Heart left ventricle (tissue), 16 donors: ENCODE measurements at regions of chr15 and their contacts with region 1.

Region 1: GRCh38 chr15:45402162-45402954 is 24.0 kb upstream of the GATM start:
- DNase-seq: peak; percentile 98 to 99 (median 98)
- ATAC-seq: peak; percentile 98 to 99 (median 98)
- H3K4me3 ChIP-seq: peak overlapping the region; percentile 68 to 98 (median 86)
- H3K27ac ChIP-seq: peak overlapping the region; percentile 77 to 97 (median 90)
- H3K4me1 ChIP-seq: peaks cover 0 to 35% (median 19%) of the 10 kb centered on the region in 12 donors
- H3K27me3 ChIP-seq: no peaks in the 10 kb centered on the region
- CTCF ChIP-seq: peak in 1 of 12 donors; percentile 5
- POLR2A ChIP-seq: peak in 1 of 2 donors; percentile 74

Region 2: DNA sequence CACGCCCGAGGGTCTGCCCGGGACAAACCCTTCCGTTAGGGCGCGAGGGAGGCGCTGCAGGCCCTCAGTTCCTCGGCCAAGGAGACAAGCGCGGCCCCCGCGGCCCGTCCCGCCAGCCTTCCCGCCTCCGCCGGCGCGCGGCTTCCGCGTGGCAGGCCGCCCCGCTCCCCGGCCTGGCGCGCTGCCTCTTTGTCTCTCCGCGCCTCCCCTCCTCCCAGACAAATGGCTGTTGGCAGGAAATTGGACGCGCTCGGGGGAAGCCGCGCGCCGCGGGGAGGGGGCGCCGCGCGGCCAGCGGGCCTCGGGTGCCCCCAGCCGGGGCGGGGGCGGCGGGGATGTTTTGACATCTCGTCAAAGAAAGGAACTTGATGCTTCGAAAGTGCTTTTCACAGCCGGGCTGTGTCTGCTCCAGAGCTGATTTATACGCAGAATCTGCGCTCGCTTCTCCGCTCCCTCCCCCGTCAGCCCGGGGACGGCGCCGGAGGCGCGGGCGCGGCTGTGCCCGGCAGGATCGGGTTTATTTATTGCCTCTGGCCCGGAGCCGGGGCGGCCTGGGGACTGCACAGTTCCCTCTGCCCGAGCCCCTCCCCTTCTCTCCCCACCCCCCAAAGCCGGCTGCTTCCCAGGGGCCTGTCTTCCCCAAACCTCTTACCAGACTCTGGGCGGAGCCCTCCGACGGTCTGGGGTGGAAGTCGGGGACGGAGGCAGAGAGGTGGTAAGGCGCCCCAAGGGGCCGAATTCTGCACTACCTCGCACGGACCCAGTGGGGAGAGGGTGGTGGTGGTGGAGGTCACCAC is 235.3 kb before region 1 on chr15:
- intact Hi-C with region 1: loop called in 9 of 10 experiments (anchors 1 to 10 kb)
- DNase-seq: peak; percentile 85 to 93 (median 91)
- ATAC-seq: peak; percentile 67 to 87 (median 85)
- H3K4me3 ChIP-seq: peak overlapping the region; percentile 59 to 93 (median 76)
- H3K27ac ChIP-seq: peak overlapping the region; percentile 94 to 100 (median 99)
- H3K4me1 ChIP-seq: peaks cover 0 to 31% (median 14%) of the 10 kb centered on the region in 12 donors
- H3K27me3 ChIP-seq: no peaks in the 10 kb centered on the region
- CTCF ChIP-seq: peak; percentile 32 to 70 (median 58)
- POLR2A ChIP-seq: peak in 1 of 2 donors; percentile 39

Region 3: DNA sequence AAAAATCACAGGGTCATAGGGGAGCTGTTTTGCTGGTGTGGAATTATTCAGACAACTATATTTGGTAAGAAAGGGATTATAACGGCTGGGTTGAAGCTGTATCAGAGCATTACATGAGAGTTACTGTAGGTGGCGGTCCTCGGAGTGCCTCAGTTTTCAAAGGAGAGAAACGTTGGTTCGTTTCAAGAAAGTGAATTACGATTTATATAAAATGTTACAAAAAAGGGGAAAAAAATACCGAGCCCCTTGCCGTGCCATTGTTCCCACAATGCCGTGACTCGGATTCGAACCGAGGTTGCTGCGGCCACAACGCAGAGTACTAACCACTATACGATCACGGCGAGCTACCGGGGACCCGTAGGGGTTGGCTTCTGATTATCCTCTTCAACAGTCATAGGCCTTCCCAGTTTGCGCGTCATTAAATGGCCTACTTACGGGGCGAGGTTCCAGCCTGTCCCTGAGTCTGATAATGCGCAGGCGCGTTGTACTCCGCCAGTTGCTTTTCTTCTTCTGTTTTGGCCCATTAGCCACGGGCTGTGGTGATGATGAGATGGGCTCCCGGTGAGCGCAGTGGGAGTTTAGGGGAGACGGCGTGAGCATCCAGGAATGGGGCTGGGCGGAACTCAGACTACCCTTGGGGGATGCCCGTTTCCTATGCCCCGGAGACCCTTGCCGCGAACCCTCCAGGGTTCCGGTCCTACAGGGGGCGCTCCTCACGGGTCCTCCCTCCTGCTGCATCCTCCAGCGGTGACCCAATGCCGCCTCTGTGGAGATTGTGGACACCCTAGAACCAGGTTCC is 203.8 kb before region 1 on chr15:
- intact Hi-C with region 1: loop called in 7 of 10 experiments (anchors 1 to 10 kb)
- DNase-seq: peak; percentile 92 to 97 (median 95)
- ATAC-seq: peak; percentile 77 to 84 (median 80)
- H3K4me3 ChIP-seq: peak overlapping the region; percentile 25 to 85 (median 70)
- H3K27ac ChIP-seq: peak overlapping the region; percentile 94 to 99 (median 98)
- H3K4me1 ChIP-seq: peaks cover 0 to 43% (median 6%) of the 10 kb centered on the region in 12 donors
- H3K27me3 ChIP-seq: no peaks in the 10 kb centered on the region
- CTCF ChIP-seq: peak in 11 of 12 donors; percentile 52 to 92 (median 71)
- POLR2A ChIP-seq: peak in 1 of 2 donors; percentile 96

Region 4: DNA sequence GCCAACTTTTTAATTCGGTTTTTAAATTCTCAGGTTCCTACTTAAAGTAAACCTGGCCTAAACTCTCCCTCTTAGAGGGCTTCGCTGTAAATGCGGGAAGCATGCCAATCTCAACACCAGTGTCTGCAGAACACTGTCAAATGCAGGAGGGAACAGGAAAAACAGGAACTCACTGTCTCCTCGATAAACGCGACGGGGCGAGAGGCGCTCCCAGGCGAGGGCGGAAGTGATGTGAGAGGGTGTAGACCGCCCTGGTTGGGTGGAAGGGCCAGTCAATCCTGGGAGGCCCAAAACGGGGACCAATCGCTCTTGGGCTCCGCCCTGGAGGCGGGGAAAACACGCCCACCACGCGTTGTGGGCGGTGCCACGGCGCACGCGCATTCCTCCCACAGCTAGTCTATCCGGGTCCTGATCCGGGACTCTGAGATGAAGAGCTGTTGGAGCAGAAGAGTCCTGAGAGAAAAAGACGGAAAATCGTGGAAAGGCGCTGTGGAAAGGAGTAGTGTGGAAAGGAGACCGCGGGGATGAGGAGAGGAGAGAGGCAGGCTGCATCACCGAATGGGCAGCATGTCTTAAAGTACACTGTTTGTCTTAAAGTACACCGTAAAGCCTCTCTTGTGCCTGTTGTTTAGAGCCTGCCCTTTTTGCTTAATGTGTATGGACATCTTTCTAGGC is 123.2 kb before region 1 on chr15:
- intact Hi-C with region 1: loop called in 1 of 10 experiments (anchors 1 kb)
- DNase-seq: peak; percentile 97 to 99 (median 98)
- ATAC-seq: peak; percentile 100
- H3K4me3 ChIP-seq: peak overlapping the region; percentile 25 to 74 (median 68)
- H3K27ac ChIP-seq: peak overlapping the region; percentile 60 to 93 (median 86)
- H3K4me1 ChIP-seq: peaks cover 0 to 18% (median 8%) of the 10 kb centered on the region in 12 donors
- H3K27me3 ChIP-seq: no peaks in the 10 kb centered on the region
- CTCF ChIP-seq: no peak
- POLR2A ChIP-seq: peak in 1 of 2 donors; percentile 87

Region 5: DNA sequence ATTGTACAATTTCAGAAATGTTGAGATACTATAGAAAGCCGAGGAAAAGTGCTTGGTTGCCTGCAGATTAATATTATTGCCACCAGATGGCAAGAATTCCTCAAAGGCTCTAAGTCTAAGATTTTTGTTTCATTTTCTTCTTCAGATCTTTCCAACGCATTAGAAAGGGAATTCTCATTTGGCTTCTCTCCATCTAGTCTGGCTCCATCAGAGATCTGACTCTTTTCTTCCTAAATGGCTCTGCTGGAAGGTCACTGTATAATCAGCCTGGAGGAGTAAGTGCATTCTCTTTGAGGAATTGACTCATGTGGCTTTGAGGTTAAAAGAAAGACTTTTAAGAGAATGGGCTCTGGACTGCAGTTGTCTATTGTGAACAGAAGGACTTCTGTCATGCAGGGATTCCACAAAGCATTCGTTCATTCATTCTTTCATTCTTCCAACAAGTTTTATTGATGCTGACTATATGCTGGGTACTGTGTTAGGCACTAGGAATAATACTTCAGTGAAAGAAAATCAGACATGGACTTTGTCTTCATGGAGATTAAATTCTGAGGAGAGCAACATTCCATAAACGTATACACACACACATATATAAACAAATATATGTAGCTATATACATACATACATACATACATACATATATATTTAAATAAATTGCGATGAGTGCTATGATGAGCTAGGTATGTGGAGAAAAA is 95.0 kb before region 1 on chr15:
- intact Hi-C with region 1: loop called (anchors 1 to 5 kb)
- DNase-seq: no peak
- ATAC-seq: peak in 2 of 4 donors; percentile 54 to 68
- H3K4me3 ChIP-seq: peak overlapping the region in 7 of 12 donors; percentile 27 to 45 (median 33)
- H3K27ac ChIP-seq: peak overlapping the region in 2 of 12 donors; percentile 28 to 37
- H3K4me1 ChIP-seq: peaks cover 0 to 12% (median 3%) of the 10 kb centered on the region in 12 donors
- H3K27me3 ChIP-seq: peaks cover 0 to 4% (median 0%) of the 10 kb centered on the region in 9 donors
- CTCF ChIP-seq: peak; percentile 38 to 78 (median 60)
- POLR2A ChIP-seq: no peak

Region 6: DNA sequence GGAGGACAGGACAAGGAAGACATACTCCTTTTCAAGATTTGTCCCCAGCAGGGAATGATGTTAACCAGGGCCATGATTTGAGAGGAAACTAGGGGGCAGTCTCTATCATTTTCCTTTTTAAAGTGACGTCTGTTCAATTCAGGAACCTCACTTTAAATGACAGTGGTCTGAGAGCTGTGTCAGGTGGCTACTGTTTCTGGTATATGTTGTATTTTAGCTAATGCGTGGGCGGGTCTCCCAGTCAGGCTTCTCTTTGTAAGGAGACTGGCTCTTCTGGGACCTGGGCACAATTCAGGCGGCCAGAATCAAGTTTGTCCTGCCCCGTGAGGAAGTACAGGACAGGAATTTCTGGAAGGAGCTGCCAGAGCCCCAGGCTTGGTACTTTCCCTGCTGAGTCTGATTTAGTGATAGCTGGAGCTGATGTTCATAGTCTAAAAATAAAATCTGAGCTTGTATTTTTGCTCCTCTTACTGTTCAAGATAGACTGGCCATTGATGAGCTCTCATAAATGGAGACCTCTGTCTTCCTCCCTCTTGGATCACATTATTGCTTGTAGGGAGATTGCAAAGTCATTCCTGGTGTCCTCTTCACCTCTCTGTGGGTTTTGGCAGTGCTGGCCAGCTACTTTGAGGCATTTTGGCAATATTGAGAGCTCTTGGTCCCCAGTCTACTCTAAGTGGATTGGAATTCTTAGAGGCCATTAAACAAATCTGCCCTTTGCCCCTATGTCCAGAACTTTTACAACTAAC is 258.0 kb after region 1 on chr15:
- intact Hi-C with region 1: no loop called
- DNase-seq: peak in 1 of 5 donors; percentile 38
- ATAC-seq: peak; percentile 45 to 70 (median 52)
- H3K4me3 ChIP-seq: no peak overlapping the region
- H3K27ac ChIP-seq: peak overlapping the region in 3 of 12 donors; percentile 30 to 59 (median 56)
- H3K4me1 ChIP-seq: peaks cover 0 to 32% (median 12%) of the 10 kb centered on the region in 12 donors
- H3K27me3 ChIP-seq: no peaks in the 10 kb centered on the region
- CTCF ChIP-seq: peak in 2 of 12 donors; percentile 13 to 23
- POLR2A ChIP-seq: no peak